Calu3 (cell line): ENCODE measurements at regions of chr2 and their contacts with region 1.

Region 1: GRCh38 chr2:152240559-152241231 is 65.1 kb upstream of the STAM2 start:
- DNase-seq: no peak
- H3K4me3 Mint-ChIP-seq: no peak overlapping the region
- H3K27ac Mint-ChIP-seq: no peak overlapping the region
- H3K4me1 Mint-ChIP-seq: peaks cover 9% of the 10 kb centered on the region
- H3K27me3 Mint-ChIP-seq: no peaks in the 10 kb centered on the region
- CTCF ChIP-seq: no peak

Region 2: GRCh38 chr2:152222975-152223637 is 17.6 kb before region 1 on chr2:
- CTCF ChIA-PET with region 1: no interaction called
- intact Hi-C with region 1: loop called (anchors 1 kb)
- DNase-seq: peak; percentile 26
- H3K4me3 Mint-ChIP-seq: no peak overlapping the region
- H3K27ac Mint-ChIP-seq: no peak overlapping the region
- H3K4me1 Mint-ChIP-seq: peaks cover 13% of the 10 kb centered on the region
- H3K27me3 Mint-ChIP-seq: no peaks in the 10 kb centered on the region
- CTCF ChIP-seq: no peak

Region 3: GRCh38 chr2:152627351-152627957 is 386.8 kb after region 1 on chr2:
- CTCF ChIA-PET with region 1: no interaction called
- intact Hi-C with region 1: no loop called
- DNase-seq: peak; percentile 21
- H3K4me3 Mint-ChIP-seq: no peak overlapping the region
- H3K27ac Mint-ChIP-seq: no peak overlapping the region
- H3K4me1 Mint-ChIP-seq: no peaks in the 10 kb centered on the region
- H3K27me3 Mint-ChIP-seq: no peaks in the 10 kb centered on the region
- CTCF ChIP-seq: no peak